Right cardiac atrium (tissue), 5 donors: ENCODE measurements at regions of chr12 and their contacts with region 1.

Region 1: DNA sequence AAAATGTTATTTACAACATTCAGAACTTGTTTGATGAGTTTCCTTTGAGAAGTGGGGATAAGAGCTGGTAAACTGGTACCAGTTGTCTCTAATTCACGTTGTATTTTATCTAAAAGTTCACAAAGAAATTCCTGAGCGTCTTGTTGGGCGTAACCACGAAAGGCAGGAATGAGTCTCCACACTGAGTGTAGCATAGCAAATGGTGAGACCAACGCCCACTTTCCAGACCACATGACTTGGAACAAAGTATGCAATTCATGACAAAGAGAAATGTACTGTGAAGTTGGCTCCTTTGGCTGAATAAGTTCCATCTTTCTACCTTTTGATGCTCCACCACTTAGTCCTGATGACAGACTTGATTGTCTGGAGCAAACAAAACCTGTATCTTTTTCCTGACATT is 18.4 kb downstream of the USP44 start:
- DNase-seq: no peak
- ATAC-seq: peak in 1 of 2 donors; percentile 47
- H3K4me3 ChIP-seq: no peak overlapping the region
- H3K27ac ChIP-seq: no peak overlapping the region
- H3K4me1 ChIP-seq: no peaks in the 10 kb centered on the region
- H3K27me3 ChIP-seq: no peaks in the 10 kb centered on the region

Region 2: DNA sequence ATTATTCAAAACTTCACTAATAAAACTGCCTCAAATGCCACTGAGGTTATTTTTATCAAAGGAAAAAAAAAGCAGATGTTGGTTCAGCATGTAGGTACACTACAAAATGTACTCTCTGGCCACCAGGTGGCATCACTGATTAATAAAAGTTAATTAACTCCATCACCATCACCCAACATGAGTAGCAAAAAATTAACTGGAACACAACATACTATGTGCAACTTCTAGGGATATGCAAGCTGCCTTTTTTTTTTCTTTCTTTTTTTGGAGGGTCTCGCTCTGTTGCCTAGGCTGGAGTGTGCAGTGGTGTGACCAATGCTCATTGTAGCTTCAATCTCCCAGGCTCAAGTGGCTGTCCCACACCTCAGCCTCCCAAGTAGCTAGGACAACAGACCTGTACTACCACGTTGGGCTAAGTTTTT is 415.7 kb before region 1 on chr12:
- intact Hi-C with region 1: loop called in 3 of 4 experiments (anchors 5 to 10 kb)
- DNase-seq: peak in 2 of 3 donors; percentile 61 to 74
- ATAC-seq: peak; percentile 91 to 92
- H3K4me3 ChIP-seq: no peak overlapping the region
- H3K27ac ChIP-seq: no peak overlapping the region
- H3K4me1 ChIP-seq: peaks cover 5% of the 10 kb centered on the region
- H3K27me3 ChIP-seq: no peaks in the 10 kb centered on the region

Region 3: DNA sequence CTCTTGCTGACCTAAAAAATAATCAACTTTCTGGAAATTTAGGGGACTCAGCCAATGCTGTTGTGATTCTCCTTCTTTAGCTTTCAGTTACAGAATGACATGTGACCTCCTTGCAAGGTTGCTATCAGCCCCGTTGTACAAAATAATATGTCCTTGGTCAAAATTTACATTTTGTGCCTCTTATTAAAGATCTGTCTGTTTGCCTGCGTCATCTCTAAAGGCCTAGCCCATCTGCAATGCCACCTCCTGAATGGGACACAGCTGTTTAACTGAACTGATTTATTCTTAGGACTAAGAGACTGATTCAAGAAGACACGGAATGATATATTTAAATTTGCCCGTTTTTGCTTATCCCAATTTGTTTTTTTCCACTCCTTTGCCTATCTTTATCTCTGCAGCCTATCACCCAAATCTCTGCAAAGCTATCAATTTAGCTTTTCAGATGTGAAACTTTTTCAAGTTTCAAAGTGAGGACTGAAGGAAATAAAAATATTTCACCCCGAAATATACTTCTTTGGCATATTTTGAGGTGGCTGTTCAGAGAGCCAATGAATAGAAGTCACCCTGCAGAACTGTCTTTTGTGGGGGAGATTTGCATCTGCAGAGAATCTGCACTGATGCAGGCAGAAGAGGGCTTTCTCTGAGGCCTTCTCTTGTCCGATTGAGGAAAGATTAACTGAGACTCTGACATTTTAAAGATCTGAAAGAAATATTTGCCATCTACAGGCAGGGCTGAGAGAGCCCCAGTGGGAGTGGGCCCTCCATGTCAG is 189.2 kb before region 1 on chr12:
- intact Hi-C with region 1: loop called in 1 of 4 experiments (anchors 10 kb)
- DNase-seq: no peak
- ATAC-seq: no peak
- H3K4me3 ChIP-seq: no peak overlapping the region
- H3K27ac ChIP-seq: no peak overlapping the region
- H3K4me1 ChIP-seq: no peaks in the 10 kb centered on the region
- H3K27me3 ChIP-seq: no peaks in the 10 kb centered on the region

Region 4: DNA sequence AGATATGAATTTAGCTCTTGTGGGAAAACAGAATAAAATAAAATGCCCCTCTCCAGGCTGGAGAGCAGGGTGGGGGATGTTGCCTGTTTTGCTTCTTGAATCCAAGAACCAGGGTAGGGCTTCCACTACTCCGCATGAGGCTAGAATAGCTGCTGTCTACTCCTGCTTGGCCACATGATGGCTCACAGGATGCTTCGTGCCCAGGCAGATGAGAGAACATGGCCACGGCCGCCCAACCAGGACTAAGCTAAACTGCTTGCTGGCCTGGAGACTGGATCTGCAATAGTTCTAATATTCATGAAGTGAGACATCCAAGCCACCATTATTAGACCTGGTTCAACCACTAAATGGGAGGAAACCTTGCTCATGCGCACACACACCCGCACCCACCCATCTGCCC is 181.1 kb before region 1 on chr12:
- intact Hi-C with region 1: loop called in 2 of 4 experiments (anchors 10 kb)
- DNase-seq: peak; percentile 21 to 66 (median 64)
- ATAC-seq: peak; percentile 63 to 82
- H3K4me3 ChIP-seq: no peak overlapping the region
- H3K27ac ChIP-seq: no peak overlapping the region
- H3K4me1 ChIP-seq: no peaks in the 10 kb centered on the region
- H3K27me3 ChIP-seq: no peaks in the 10 kb centered on the region

Region 5: DNA sequence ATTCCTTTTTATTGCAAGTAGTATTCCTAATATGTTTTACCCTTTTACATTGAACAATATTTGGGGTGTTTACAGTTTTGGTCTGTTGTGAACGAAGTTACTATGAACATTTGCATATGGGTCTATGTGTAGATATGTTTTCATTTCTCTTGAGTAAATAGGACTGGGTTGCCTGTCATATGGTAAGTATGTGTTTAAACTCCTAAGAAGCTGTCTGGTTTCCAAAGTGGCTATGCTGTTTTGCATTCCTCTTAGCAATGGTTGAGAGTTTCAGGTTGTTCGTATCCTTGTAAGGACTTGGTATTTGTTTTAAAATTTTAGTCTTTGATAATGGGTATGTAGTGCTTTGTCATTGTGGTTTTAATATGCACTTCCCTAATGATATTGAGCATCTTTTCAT is 52.6 kb before region 1 on chr12:
- intact Hi-C with region 1: no loop called
- DNase-seq: no peak
- ATAC-seq: no peak
- H3K4me3 ChIP-seq: no peak overlapping the region
- H3K27ac ChIP-seq: no peak overlapping the region
- H3K4me1 ChIP-seq: peaks cover 3% of the 10 kb centered on the region
- H3K27me3 ChIP-seq: no peaks in the 10 kb centered on the region

Region 6: GRCh38 chr12:95663525-95663924 is 130.7 kb after region 1 on chr12:
- intact Hi-C with region 1: no loop called
- DNase-seq: no peak
- ATAC-seq: peak; percentile 57 to 81
- H3K4me3 ChIP-seq: no peak overlapping the region
- H3K27ac ChIP-seq: no peak overlapping the region
- H3K4me1 ChIP-seq: no peaks in the 10 kb centered on the region
- H3K27me3 ChIP-seq: no peaks in the 10 kb centered on the region